CD8-positive, alpha-beta T cell (primary cell): ENCODE measurements at regions of chr1 and their contacts with region 1.

Region 1: GRCh38 chr1:160098852-160099561 is 588 bp upstream of the IGSF8 start:
- DNase-seq: peak; percentile 96 to 99 (median 98)
- ATAC-seq: peak; percentile 86
- H3K4me3 ChIP-seq: peak overlapping the region; percentile 61 to 82
- H3K4me3 Mint-ChIP-seq: peak overlapping the region; percentile 80
- H3K27ac ChIP-seq: peak overlapping the region; percentile 93 to 99
- H3K27ac Mint-ChIP-seq: peak overlapping the region; percentile 94
- H3K4me1 ChIP-seq: peaks cover 77% of the 10 kb centered on the region
- H3K4me1 Mint-ChIP-seq: peaks cover 77% of the 10 kb centered on the region
- H3K27me3 ChIP-seq: no peaks in the 10 kb centered on the region
- H3K27me3 Mint-ChIP-seq: no peaks in the 10 kb centered on the region
- CTCF ChIP-seq: no peak

Region 2: GRCh38 chr1:159924981-159925712 is 173.9 kb before region 1 on chr1 and contains the start of gene TAGLN2:
- CTCF ChIA-PET with region 1: no interaction called
- POLR2A ChIA-PET with region 1: interaction called, 6 read pairs
- intact Hi-C with region 1: loop called (anchors 2 to 5 kb)
- DNase-seq: peak; percentile 82 to 94 (median 91)
- ATAC-seq: peak; percentile 55
- H3K4me3 ChIP-seq: peak within 1 kb of the TSS; percentile 83 to 96
- H3K4me3 Mint-ChIP-seq: peak within 1 kb of the TSS; percentile 95
- H3K27ac ChIP-seq: peak within 1 kb of the TSS; percentile 94 to 98
- H3K27ac Mint-ChIP-seq: peak within 1 kb of the TSS; percentile 98
- H3K4me1 ChIP-seq: peaks cover 40% of the 10 kb centered on the region
- H3K4me1 Mint-ChIP-seq: peaks cover 53% of the 10 kb centered on the region
- H3K27me3 ChIP-seq: no peaks in the 10 kb centered on the region
- H3K27me3 Mint-ChIP-seq: no peaks in the 10 kb centered on the region
- CTCF ChIP-seq: no peak
- total RNA-seq, gene TAGLN2: 235 to 238 TPM

Region 3: DNA sequence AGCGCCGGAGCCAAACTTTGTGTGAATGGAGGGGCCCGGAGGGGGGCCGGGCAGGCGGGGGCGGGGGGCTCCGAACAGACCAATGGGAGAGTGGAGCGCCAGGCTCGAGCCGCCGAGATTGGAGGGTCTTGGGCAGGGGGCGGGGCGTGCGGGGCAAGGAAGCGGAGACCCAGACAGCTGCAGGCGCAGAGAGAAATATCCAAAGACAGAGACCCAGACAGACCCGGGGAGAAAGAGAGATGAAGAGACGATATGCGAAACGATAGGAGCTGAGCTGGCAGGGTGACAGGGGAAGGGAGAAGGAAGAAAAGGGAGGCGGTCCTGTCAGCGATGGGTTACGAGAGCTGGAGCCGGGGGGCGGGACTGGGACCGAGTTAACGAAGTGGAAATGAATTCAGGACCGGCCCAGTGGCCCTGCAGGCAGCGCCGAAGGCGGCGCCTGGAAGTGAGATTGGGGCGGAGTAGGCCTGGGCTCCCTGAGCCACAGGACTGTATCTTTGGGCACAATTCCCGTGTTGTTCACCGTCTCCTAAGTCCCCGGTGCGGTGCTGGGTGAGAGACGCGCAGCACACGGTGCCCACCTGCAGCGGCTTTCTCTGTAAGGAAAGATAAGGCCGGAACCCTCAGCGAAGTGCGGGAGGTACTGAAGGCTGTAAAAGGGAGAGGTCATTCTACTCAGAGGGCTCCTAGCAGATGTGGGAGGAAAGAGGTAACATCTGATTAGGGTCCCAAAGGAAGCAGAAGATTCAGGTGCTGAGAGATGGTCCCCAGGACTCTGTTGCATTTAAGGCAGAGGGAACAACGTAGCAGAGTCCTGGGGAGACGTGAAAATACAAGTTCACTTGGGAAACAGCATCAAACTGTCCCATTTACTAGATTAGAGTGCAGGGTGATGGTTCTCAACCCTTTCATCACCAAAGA is 28.5 kb before region 1 on chr1:
- CTCF ChIA-PET with region 1: no interaction called
- POLR2A ChIA-PET with region 1: interaction called, 3 read pairs
- intact Hi-C with region 1: loop called (anchors 1 kb)
- DNase-seq: peak; percentile 57 to 86 (median 83)
- ATAC-seq: peak; percentile 98
- H3K4me3 ChIP-seq: peak overlapping the region; percentile 50 to 53
- H3K4me3 Mint-ChIP-seq: peak overlapping the region; percentile 87
- H3K27ac ChIP-seq: no peak overlapping the region
- H3K27ac Mint-ChIP-seq: no peak overlapping the region
- H3K4me1 ChIP-seq: peaks cover 10% of the 10 kb centered on the region
- H3K4me1 Mint-ChIP-seq: peaks cover 10% of the 10 kb centered on the region
- H3K27me3 ChIP-seq: peaks cover 3 to 4% of the 10 kb centered on the region in 2 experiments
- H3K27me3 Mint-ChIP-seq: peaks cover 23% of the 10 kb centered on the region
- CTCF ChIP-seq: no peak

Region 4: GRCh38 chr1:160205242-160206035 is 106.4 kb after region 1 on chr1 and contains the start of gene PEA15:
- CTCF ChIA-PET with region 1: interaction called, 3 read pairs
- POLR2A ChIA-PET with region 1: interaction called, 3 read pairs
- intact Hi-C with region 1: loop called (anchors 2 to 5 kb)
- DNase-seq: peak; percentile 19 to 80 (median 66)
- ATAC-seq: peak; percentile 70
- H3K4me3 ChIP-seq: peak within 1 kb of the TSS; percentile 69 to 89
- H3K4me3 Mint-ChIP-seq: peak within 1 kb of the TSS; percentile 90
- H3K27ac ChIP-seq: peak within 1 kb of the TSS; percentile 57 to 83
- H3K27ac Mint-ChIP-seq: peak within 1 kb of the TSS; percentile 89
- H3K4me1 ChIP-seq: peaks cover 19% of the 10 kb centered on the region
- H3K4me1 Mint-ChIP-seq: peaks cover 36% of the 10 kb centered on the region
- H3K27me3 ChIP-seq: no peaks in the 10 kb centered on the region
- H3K27me3 Mint-ChIP-seq: no peaks in the 10 kb centered on the region
- CTCF ChIP-seq: no peak
- total RNA-seq, gene PEA15: 9.1 to 10.9 TPM

Region 5: GRCh38 chr1:160284782-160285344 is 185.9 kb after region 1 on chr1 and contains the start of gene PEX19:
- CTCF ChIA-PET with region 1: interaction called, 102 read pairs
- POLR2A ChIA-PET with region 1: interaction called, 20 read pairs
- intact Hi-C with region 1: loop called in 1 of 2 experiments (anchors 1 kb)
- DNase-seq: peak; percentile 87 to 96 (median 93)
- ATAC-seq: peak; percentile 100
- H3K4me3 ChIP-seq: peak within 1 kb of the TSS; percentile 73 to 89
- H3K4me3 Mint-ChIP-seq: peak within 1 kb of the TSS; percentile 94
- H3K27ac ChIP-seq: peak within 1 kb of the TSS; percentile 62 to 75
- H3K27ac Mint-ChIP-seq: peak within 1 kb of the TSS; percentile 91
- H3K4me1 ChIP-seq: peaks cover 22% of the 10 kb centered on the region
- H3K4me1 Mint-ChIP-seq: peaks cover 21% of the 10 kb centered on the region
- H3K27me3 ChIP-seq: no peaks in the 10 kb centered on the region
- H3K27me3 Mint-ChIP-seq: no peaks in the 10 kb centered on the region
- CTCF ChIP-seq: no peak
- total RNA-seq, gene PEX19: 36.0 to 37.4 TPM

Region 6: DNA sequence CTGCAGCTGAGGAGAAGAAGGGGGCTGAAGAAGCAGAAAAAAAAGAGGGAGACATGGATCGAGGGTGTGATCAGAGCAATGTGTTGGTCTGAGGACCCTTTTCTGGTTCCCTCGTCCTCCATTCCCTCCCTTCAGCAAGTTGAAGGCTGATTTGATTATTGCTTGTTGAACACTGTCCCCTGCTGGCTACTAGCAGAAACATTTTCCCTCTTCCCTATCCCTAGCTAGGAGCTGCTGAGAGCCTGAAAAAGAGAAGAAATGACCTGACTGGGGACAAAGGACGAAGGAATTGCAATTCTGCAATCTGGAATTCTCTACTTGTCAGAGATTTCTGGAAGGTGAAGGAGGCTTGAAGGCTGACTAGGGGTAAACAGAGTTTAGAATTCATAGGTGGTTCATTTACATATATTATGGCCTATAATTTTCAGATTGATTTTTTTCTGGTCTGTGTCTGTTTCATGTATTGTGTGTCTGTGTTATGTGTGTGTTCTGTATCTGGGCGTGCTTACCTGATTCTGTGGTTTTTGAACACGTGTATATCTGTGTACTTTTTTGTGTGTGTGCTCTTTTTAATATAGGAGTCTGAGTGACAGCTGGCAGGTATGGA is 277.6 kb after region 1 on chr1:
- CTCF ChIA-PET with region 1: interaction called, 6 read pairs
- POLR2A ChIA-PET with region 1: interaction called, 4 read pairs
- intact Hi-C with region 1: loop called in 1 of 2 experiments (anchors 2 kb)
- DNase-seq: peak in 5 of 9 experiments; percentile 13 to 75 (median 53)
- ATAC-seq: peak; percentile 61
- H3K4me3 ChIP-seq: no peak overlapping the region
- H3K4me3 Mint-ChIP-seq: no peak overlapping the region
- H3K27ac ChIP-seq: no peak overlapping the region
- H3K27ac Mint-ChIP-seq: no peak overlapping the region
- H3K4me1 ChIP-seq: peaks cover 12% of the 10 kb centered on the region
- H3K4me1 Mint-ChIP-seq: peaks cover 15% of the 10 kb centered on the region
- H3K27me3 ChIP-seq: no peaks in the 10 kb centered on the region
- H3K27me3 Mint-ChIP-seq: no peaks in the 10 kb centered on the region
- CTCF ChIP-seq: peak; percentile 65